ENCODE measurements at regions of chr1 and their contacts with region 1.

Region 1: DNA sequence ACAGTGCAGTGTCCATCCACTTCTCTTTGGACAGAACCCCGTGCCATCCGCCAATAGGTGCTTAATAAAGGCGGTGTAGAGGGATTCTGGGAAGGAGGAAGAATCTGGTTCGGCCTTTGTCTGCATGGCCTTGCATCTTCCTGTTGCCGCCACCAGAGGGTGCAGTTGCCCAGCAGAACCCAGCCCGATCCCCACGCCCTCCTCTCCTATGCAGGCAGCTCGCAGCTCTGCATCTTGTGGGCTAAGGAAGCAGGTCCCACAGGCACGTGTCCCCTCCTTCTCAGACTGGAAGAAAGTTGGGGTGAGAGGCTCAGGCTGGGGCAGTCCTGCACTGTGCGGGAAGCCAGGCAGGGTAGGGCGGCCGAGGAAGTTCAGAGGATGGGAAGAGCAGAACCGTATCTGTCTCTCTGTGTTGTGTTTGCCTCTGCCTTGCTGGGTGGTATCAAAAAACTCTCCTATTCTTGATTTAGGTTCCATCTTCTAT is 20.8 kb downstream of the NAV1 start:
- DNase-seq: peak; percentile 54
- H3K4me3 ChIP-seq: no peak overlapping the region
- H3K27ac ChIP-seq: no peak overlapping the region
- H3K4me1 ChIP-seq: peaks cover 11% of the 10 kb centered on the region
- H3K27me3 ChIP-seq: no peaks in the 10 kb centered on the region
- CTCF ChIP-seq: peak; percentile 93

Region 2: GRCh38 chr1:201476670-201477344 is 82.9 kb before region 1 on chr1:
- CTCF ChIA-PET with region 1: no interaction called
- dilution Hi-C with region 1: loop called (anchors 5 kb)
- in situ Hi-C with region 1: no loop called
- intact Hi-C with region 1: loop called (anchors 5 kb)
- DNase-seq: peak; percentile 99
- H3K4me3 ChIP-seq: no peak overlapping the region
- H3K27ac ChIP-seq: peak overlapping the region; percentile 97
- H3K4me1 ChIP-seq: peaks cover 58% of the 10 kb centered on the region
- H3K27me3 ChIP-seq: no peaks in the 10 kb centered on the region
- CTCF ChIP-seq: peak in 1 of 2 donors; percentile 39

Region 3: GRCh38 chr1:201511941-201512539 is 47.7 kb before region 1 on chr1:
- CTCF ChIA-PET with region 1: no interaction called
- dilution Hi-C with region 1: loop called (anchors 5 kb)
- in situ Hi-C with region 1: no loop called
- intact Hi-C with region 1: no loop called
- DNase-seq: no peak
- H3K4me3 ChIP-seq: no peak overlapping the region
- H3K27ac ChIP-seq: no peak overlapping the region
- H3K4me1 ChIP-seq: peaks cover 36% of the 10 kb centered on the region
- H3K27me3 ChIP-seq: no peaks in the 10 kb centered on the region
- CTCF ChIP-seq: no peak

Region 4: DNA sequence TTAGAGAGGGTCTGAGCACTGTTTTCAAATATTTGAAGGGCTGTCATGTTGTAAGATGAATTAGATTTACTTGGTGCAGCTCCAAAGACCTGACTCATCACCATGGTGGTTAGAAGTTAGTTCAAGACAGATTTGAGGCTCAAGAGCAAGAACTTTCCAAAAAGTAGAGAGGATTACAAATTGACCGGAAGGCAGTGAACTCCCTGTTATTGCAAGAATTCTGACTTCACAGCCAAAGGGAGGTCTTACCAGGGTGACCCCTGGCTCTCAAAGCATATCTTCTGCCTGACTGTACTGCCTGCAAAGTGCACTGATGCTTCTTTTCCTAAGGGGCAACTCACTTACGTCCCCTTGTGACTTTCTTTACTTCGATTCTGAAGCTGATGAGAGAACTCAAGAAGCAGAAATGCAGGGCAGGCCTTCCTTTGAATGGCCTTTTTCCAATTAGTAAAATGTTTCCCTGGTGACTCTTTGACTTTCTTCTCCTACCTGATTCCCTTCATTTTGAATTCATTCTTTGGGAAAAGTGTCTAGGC is 65.6 kb after region 1 on chr1:
- CTCF ChIA-PET with region 1: no interaction called
- dilution Hi-C with region 1: loop called (anchors 5 kb)
- in situ Hi-C with region 1: no loop called
- intact Hi-C with region 1: no loop called
- DNase-seq: no peak
- H3K4me3 ChIP-seq: no peak overlapping the region
- H3K27ac ChIP-seq: no peak overlapping the region
- H3K4me1 ChIP-seq: no peaks in the 10 kb centered on the region
- H3K27me3 ChIP-seq: no peaks in the 10 kb centered on the region
- CTCF ChIP-seq: no peak

Region 5: DNA sequence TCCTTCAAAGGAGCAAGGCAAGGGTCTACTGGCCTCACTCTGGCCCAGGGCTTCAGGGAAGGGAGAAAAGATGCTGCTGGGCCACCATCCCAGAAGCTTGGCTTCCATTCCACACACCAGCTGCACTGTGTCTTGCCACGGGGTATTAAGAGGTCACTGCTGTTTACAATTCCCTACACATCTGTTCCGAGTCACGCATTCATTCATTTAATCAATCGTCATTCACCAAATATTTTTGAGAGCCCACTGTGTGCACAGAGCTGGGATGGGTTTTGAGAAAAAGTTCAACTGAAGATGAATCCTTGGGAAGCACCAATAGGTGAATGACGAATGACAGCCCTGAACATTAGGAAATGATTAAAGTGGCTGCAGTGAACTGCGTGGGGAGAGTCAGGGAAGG is 80.9 kb after region 1 on chr1:
- CTCF ChIA-PET with region 1: no interaction called
- dilution Hi-C with region 1: no loop called
- in situ Hi-C with region 1: no loop called
- intact Hi-C with region 1: no loop called
- DNase-seq: no peak
- H3K4me3 ChIP-seq: no peak overlapping the region
- H3K27ac ChIP-seq: no peak overlapping the region
- H3K4me1 ChIP-seq: no peaks in the 10 kb centered on the region
- H3K27me3 ChIP-seq: no peaks in the 10 kb centered on the region
- CTCF ChIP-seq: no peak

Region 6: DNA sequence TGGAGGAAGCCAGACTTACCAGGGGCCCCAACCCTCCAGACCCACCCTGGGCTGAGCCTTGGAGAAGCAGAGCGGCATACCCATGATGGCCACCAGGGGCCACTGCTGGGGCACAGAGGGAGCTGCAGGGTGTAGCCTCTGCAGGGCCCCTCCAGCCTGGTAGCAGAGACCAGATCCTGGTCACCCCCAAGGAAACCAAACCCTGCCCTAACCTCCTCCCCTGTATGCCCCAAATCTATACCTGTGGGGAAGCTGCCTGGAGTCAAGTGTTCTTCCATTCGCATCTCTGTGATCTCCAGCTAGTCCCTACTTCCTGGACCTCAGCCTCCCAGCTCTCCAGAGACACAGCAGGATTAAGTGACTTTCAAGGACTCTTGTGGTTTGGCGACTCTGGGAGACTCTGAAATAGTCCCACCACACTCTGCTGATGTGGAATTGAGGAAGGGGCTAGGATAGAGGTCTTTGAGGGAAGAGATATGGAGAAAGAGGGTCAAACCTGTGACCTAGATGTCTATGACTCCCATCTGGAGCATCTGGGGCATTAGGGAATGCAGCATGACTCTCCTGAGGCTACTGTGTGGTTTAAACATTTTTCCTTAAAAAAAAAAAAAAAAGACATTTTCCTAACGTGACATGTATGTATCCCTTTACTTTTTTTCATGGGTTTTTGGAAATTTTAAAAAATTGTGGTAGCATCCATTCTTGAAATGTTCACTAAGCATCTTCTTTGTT is 150.0 kb after region 1 on chr1:
- CTCF ChIA-PET with region 1: interaction called, 4 read pairs
- dilution Hi-C with region 1: no loop called
- in situ Hi-C with region 1: loop called (anchors 5 kb)
- intact Hi-C with region 1: loop called (anchors 1 kb)
- DNase-seq: peak; percentile 35
- H3K4me3 ChIP-seq: no peak overlapping the region
- H3K27ac ChIP-seq: no peak overlapping the region
- H3K4me1 ChIP-seq: peaks cover 45% of the 10 kb centered on the region
- H3K27me3 ChIP-seq: no peaks in the 10 kb centered on the region
- CTCF ChIP-seq: peak; percentile 80 to 93

Region 7: GRCh38 chr1:201792534-201793305 is 233.0 kb after region 1 on chr1:
- CTCF ChIA-PET with region 1: interaction called, 6 read pairs
- dilution Hi-C with region 1: no loop called
- in situ Hi-C with region 1: loop called (anchors 5 to 10 kb)
- intact Hi-C with region 1: loop called (anchors 1 kb)
- DNase-seq: peak; percentile 71
- H3K4me3 ChIP-seq: no peak overlapping the region
- H3K27ac ChIP-seq: no peak overlapping the region
- H3K4me1 ChIP-seq: peaks cover 23% of the 10 kb centered on the region
- H3K27me3 ChIP-seq: no peaks in the 10 kb centered on the region
- CTCF ChIP-seq: peak; percentile 99

Region 8: DNA sequence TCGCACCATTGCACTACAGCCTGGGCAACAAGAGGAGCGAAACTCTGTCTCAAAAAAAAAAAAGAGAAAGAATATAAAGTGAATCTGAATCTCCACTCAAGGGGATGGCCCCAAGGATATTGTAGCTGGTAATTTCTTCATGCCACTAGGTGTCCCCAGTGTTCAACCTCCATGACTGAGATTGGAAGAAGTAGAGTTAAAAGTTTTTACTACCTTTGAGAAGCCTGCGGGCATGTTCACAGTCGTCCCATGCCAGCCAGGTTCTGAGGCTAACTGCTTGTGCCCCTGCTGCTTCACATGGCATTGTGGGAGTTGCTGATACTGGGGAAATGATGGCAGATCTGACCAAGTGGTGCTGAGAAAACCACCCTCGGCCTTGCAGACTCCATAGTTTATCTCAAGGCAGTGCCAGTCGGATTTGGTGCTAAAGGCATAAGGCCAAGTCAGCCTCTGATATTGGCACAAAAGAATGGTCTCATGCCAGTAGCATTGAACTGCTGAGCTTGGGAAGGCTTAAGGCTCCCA is 318.2 kb after region 1 on chr1:
- CTCF ChIA-PET with region 1: no interaction called
- dilution Hi-C with region 1: no loop called
- in situ Hi-C with region 1: no loop called
- intact Hi-C with region 1: loop called (anchors 10 kb)
- DNase-seq: peak; percentile 58
- H3K4me3 ChIP-seq: no peak overlapping the region
- H3K27ac ChIP-seq: no peak overlapping the region
- H3K4me1 ChIP-seq: peaks cover 12% of the 10 kb centered on the region
- H3K27me3 ChIP-seq: no peaks in the 10 kb centered on the region
- CTCF ChIP-seq: peak; percentile 68 to 73